Activated CD8-positive, alpha-beta T cell treated with anti-CD3 and anti-CD28 coated beads for 36 hours (primary cell): ENCODE measurements at regions of chr10 and their contacts with region 1.

Region 1: DNA sequence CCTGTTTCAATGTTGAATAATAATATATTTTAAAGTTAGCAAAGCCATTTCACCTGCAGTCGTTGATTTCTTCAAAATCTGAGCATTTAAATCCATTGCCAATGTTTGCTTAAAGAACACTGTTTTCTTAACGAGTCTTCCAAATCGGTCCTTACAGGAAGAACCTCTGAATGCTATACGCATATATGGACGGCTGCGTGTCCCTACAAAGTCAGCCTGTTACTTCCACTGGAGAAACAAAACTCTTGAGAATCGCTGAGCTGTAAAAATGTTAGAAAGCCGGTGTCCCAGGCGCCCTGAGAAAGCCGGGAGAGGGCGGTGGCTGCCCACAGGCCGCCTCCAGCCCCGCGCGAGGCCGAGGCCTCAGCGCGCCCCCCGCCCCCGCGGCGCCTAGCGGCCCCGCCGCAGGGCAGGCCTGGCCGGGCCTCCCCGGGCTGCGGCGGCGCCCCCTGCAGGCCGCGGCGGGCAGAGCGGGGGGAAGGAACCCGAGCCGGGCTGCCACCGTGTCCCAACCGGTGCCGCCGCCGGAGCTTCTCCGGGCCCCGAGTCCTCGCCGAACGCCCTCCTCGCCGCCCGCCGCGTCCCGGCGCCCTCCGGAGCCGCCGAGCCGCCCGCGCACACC is at the start of gene FHIP2A:
- DNase-seq: peak; percentile 84
- ATAC-seq: peak; percentile 91
- H3K4me3 Mint-ChIP-seq: peak within 1 kb of the TSS; percentile 92
- H3K27ac Mint-ChIP-seq: peak within 1 kb of the TSS; percentile 94
- H3K4me1 Mint-ChIP-seq: peaks cover 34% of the 10 kb centered on the region
- H3K27me3 Mint-ChIP-seq: peaks cover 2% of the 10 kb centered on the region
- CTCF ChIP-seq: no peak
- total RNA-seq, gene FHIP2A: 12.6 to 16.6 TPM

Region 2: DNA sequence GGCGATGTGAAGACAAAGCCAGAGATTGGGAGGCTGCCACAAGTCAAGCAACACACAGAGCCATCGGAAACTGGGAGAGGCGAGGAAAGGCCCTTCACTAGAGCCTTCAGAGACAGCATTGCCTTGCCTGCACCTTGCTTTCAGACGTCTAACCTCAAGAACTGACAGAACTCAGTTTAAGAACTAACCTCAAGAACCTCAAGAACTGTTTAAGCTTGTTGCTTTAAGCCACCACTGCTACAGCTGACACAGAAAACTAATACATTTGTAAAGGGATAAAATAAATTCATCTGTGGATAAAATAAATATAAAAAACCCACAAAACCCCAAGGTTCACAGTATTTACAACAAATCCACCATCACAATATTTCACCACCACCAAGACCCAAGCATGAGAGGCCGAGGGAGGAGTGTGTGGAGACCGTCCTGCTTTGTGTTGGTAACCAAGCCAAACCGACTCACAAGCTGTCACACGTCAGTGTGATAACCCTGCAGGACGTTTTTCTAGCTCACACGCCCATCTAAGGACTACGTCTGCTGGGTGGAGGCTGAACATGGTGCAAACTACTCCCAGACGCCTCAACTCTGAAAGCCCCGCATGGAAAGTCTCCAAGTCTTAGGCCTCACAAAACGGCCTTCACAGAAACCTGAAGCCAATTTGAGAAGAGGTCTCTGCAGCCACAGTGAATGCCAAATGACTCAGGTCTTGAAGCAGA is 280.2 kb before region 1 on chr10:
- CTCF ChIA-PET with region 1: interaction called, 15 read pairs
- POLR2A ChIA-PET with region 1: interaction called, 8 read pairs
- intact Hi-C with region 1: no loop called
- DNase-seq: peak; percentile 89
- ATAC-seq: peak; percentile 83
- H3K4me3 Mint-ChIP-seq: peak overlapping the region; percentile 70
- H3K27ac Mint-ChIP-seq: peak overlapping the region; percentile 100
- H3K4me1 Mint-ChIP-seq: peaks cover 87% of the 10 kb centered on the region
- H3K27me3 Mint-ChIP-seq: no peaks in the 10 kb centered on the region
- CTCF ChIP-seq: no peak

Region 3: DNA sequence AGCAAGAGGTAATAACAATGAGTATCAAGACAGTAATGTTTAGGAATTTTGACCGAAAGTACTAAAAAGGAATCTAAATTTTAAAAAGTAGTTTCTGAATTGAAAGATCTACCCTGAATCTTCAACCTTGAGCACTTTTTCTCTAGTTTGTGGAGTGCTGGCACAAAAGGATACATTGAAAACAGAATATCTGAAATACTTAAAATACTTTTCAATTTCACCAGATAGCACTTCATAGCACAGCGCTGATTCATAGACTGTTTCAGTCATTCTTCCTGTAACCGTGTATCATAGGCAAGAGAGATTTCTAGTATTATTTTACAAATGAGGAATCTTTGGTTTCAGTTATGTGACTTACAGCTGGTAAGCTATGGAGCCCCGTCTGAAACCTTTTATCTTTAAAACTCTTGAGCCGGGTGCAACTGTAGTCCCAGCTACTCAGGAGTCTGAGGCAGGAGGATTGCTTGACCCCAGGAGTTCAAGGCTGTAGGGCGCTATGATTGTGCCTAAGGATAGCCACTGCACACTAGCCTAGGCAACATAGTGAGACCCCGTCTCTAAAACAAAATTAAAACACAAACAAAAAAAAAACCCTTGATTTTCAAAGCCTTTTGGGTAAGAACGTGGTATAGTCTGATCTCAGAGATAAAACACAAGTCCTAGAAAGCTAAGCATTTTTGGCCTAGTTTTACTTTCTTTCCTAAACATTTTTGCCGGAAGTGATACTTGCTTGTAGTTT is 35.3 kb after region 1 on chr10:
- CTCF ChIA-PET with region 1: interaction called, 15 read pairs
- POLR2A ChIA-PET with region 1: interaction called, 5 read pairs
- intact Hi-C with region 1: no loop called
- DNase-seq: peak; percentile 5
- ATAC-seq: peak; percentile 80
- H3K4me3 Mint-ChIP-seq: peak overlapping the region; percentile 41
- H3K27ac Mint-ChIP-seq: peak overlapping the region; percentile 78
- H3K4me1 Mint-ChIP-seq: peaks cover 22% of the 10 kb centered on the region
- H3K27me3 Mint-ChIP-seq: no peaks in the 10 kb centered on the region
- CTCF ChIP-seq: no peak

Region 4: GRCh38 chr10:114905450-114905849 is 84.0 kb after region 1 on chr10:
- CTCF ChIA-PET with region 1: no interaction called
- POLR2A ChIA-PET with region 1: no interaction called
- intact Hi-C with region 1: no loop called
- DNase-seq: no peak
- ATAC-seq: no peak
- H3K4me3 Mint-ChIP-seq: no peak overlapping the region
- H3K27ac Mint-ChIP-seq: no peak overlapping the region
- H3K4me1 Mint-ChIP-seq: no peaks in the 10 kb centered on the region
- H3K27me3 Mint-ChIP-seq: peaks cover 10% of the 10 kb centered on the region
- CTCF ChIP-seq: no peak

Region 5: DNA sequence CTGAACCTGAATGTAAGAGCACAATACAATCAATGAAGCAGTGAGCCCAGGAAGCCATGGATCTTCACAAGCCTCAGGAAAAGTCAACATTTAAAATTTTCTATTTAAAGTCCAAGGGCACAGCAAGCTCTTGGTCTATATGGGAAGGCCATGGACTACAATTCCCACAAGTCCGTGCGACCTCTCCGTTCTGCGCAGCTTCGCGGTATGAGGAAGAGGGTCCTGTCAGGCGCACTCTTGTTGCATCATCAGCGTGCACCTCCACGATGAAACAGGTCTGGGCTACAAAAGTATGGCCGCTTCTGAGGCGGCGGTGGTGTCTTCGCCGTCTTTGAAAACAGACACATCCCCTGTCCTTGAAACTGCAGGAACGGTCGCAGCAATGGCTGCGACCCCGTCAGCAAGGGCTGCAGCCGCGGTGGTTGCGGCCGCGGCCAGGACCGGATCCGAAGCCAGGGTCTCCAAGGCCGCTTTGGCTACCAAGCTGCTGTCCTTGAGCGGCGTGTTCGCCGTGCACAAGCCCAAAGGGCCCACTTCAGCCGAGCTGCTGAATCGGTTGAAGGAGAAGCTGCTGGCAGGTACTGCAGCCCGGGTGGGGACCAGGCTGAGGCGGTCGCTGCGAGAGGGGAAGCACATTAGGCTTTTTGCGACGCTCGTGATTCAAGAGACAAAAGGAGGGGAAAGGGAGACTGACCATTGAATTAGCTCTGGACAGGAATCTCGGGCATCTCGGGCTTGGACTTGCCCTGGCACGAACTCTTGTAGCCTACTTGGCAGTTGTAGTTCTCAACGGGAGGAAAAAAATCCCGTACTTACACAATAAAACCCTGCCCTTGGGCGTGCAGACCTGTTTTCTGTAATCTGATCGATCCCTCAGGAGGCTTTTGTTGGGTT is 116.8 kb after region 1 on chr10 and contains the start of gene TRUB1:
- CTCF ChIA-PET with region 1: interaction called, 10 read pairs
- POLR2A ChIA-PET with region 1: interaction called, 3 read pairs
- intact Hi-C with region 1: no loop called
- DNase-seq: peak; percentile 97
- ATAC-seq: peak; percentile 100
- H3K4me3 Mint-ChIP-seq: peak within 1 kb of the TSS; percentile 91
- H3K27ac Mint-ChIP-seq: peak within 1 kb of the TSS; percentile 95
- H3K4me1 Mint-ChIP-seq: peaks cover 34% of the 10 kb centered on the region
- H3K27me3 Mint-ChIP-seq: no peaks in the 10 kb centered on the region
- CTCF ChIP-seq: no peak
- total RNA-seq, gene TRUB1: 14.9 to 16.8 TPM

Region 6: DNA sequence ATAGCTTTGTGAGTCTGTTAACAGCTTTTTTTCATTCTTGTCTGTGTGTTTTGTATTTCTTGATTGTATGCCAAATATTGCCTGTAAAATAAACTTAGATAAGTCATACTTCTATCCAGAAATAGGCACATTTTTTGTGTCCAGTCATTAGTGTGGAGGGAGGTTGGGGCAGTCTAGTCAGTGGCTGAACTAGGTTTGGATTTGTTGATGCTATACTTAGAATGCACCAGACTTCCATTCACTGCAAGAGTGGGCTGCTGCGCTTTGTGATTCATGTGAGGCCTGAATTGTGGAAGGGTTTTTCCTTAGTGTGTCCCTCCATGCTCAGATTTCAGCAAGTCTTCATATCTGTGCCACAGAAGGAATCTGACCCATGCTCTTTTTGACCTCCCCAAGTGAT is 166.6 kb after region 1 on chr10:
- CTCF ChIA-PET with region 1: no interaction called
- POLR2A ChIA-PET with region 1: no interaction called
- intact Hi-C with region 1: no loop called
- DNase-seq: no peak
- ATAC-seq: no peak
- H3K4me3 Mint-ChIP-seq: no peak overlapping the region
- H3K27ac Mint-ChIP-seq: no peak overlapping the region
- H3K4me1 Mint-ChIP-seq: no peaks in the 10 kb centered on the region
- H3K27me3 Mint-ChIP-seq: no peaks in the 10 kb centered on the region
- CTCF ChIP-seq: no peak